ENCODE measurements at regions of chr10 and their contacts with region 1.

Region 1: DNA sequence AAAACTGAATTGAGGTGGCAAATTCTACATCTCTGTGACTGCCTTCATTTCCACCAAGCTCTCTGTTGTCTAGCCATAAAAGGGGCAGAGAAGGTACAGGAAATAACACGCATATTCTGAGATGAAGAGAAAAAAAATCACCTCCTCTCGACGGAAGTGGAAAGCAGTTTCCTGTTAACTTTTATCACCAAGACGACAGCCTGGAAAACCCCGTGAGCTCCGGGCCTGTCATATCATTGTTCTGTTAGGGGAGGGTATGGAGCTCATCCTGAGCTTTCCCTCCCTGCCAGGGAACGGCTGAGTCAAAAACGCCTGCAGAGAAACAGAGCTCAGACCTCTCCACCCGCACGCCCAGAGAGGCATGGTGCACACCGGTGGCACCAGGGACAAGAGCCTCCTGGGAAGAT is 200.3 kb downstream of the PRPF18 start:
- H3K4me3 Mint-ChIP-seq: no peak overlapping the region
- H3K27ac Mint-ChIP-seq: no peak overlapping the region
- H3K4me1 Mint-ChIP-seq: peaks cover 5% of the 10 kb centered on the region
- H3K27me3 Mint-ChIP-seq: peaks cover 3% of the 10 kb centered on the region

Region 2: GRCh38 chr10:13994932-13995331 is 207.9 kb after region 1 on chr10:
- intact Hi-C with region 1: loop called (anchors 5 kb)
- H3K4me3 Mint-ChIP-seq: no peak overlapping the region
- H3K27ac Mint-ChIP-seq: no peak overlapping the region
- H3K4me1 Mint-ChIP-seq: no peaks in the 10 kb centered on the region
- H3K27me3 Mint-ChIP-seq: peaks cover 24% of the 10 kb centered on the region

Region 3: GRCh38 chr10:14191871-14192270 is 404.9 kb after region 1 on chr10:
- intact Hi-C with region 1: loop called (anchors 10 kb)
- H3K4me3 Mint-ChIP-seq: no peak overlapping the region
- H3K27ac Mint-ChIP-seq: no peak overlapping the region
- H3K4me1 Mint-ChIP-seq: no peaks in the 10 kb centered on the region
- H3K27me3 Mint-ChIP-seq: peaks cover 26% of the 10 kb centered on the region

Region 4: GRCh38 chr10:14325325-14325955 is 538.4 kb after region 1 on chr10:
- intact Hi-C with region 1: loop called (anchors 2 kb)
- H3K4me3 Mint-ChIP-seq: no peak overlapping the region
- H3K27ac Mint-ChIP-seq: no peak overlapping the region
- H3K4me1 Mint-ChIP-seq: peaks cover 5% of the 10 kb centered on the region
- H3K27me3 Mint-ChIP-seq: peaks cover 20% of the 10 kb centered on the region